Dendritic cell treated with granulocyte-macrophage colony-stimulating factor and Interleukin-4, amounts not matched to agents 40 ng/mL and 50 ng/mL, for 4 days (primary cell): ENCODE measurements at regions of chr9 and their contacts with region 1.

Region 1: DNA sequence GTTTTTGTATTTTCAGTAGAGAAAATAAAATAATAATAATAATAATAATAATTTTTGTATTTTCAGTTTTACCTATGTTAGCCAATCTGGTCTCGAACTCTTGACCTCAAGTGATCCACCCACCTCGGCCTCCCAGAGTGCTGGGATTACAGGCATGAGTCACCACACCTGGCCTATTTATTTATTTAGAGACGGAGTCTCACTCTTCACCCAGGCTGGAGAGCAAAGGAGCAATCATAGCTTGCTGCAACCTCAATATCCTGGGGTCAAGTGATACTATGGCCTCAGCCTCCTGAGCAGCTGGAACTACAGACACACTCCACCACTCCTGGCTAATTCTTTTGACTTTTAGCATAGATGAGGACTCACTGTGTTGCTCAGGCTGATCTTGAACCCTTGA is 167.5 kb downstream of the TLE1 start:
- H3K4me3 Mint-ChIP-seq: no peak overlapping the region
- H3K27ac Mint-ChIP-seq: no peak overlapping the region
- H3K4me1 Mint-ChIP-seq: peaks cover 5% of the 10 kb centered on the region
- H3K27me3 Mint-ChIP-seq: peaks cover 1% of the 10 kb centered on the region

Region 2: GRCh38 chr9:81601639-81602628 is 80.0 kb after region 1 on chr9:
- intact Hi-C with region 1: no loop called
- H3K4me3 Mint-ChIP-seq: no peak overlapping the region
- H3K27ac Mint-ChIP-seq: no peak overlapping the region
- H3K4me1 Mint-ChIP-seq: peaks cover 6% of the 10 kb centered on the region
- H3K27me3 Mint-ChIP-seq: no peaks in the 10 kb centered on the region

Region 3: GRCh38 chr9:81848472-81848871 is 326.6 kb after region 1 on chr9:
- intact Hi-C with region 1: loop called (anchors 5 kb)
- H3K4me3 Mint-ChIP-seq: no peak overlapping the region
- H3K27ac Mint-ChIP-seq: no peak overlapping the region
- H3K4me1 Mint-ChIP-seq: no peaks in the 10 kb centered on the region
- H3K27me3 Mint-ChIP-seq: no peaks in the 10 kb centered on the region